CD14-positive monocyte (primary cell): ENCODE measurements at regions of chr12 and their contacts with region 1.

Region 1: DNA sequence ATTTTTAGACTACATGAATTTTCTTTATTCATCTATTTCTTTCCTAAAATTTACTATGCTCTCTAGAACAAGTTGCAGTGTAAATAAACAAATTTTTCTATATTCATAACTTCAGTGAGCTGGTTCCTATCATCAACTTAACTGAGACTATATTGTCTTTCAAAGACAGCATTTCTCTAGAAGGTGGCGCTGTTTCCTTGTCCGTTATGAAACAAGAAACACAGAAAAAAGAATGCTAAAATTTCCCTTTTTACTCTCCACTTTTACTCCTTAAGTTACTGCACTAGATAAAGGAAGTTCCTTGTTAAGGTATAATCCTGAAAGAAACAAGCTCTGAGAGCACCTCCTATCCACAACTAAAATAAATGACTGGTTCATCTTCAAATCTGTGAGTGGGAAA is 8.2 kb upstream of the CLEC2A start:
- DNase-seq: peak in 2 of 3 donors; percentile 50 to 59
- H3K4me3 ChIP-seq: no peak overlapping the region
- H3K4me3 Mint-ChIP-seq: peak overlapping the region in 1 of 2 donors; percentile 69
- H3K27ac ChIP-seq: peak overlapping the region in 1 of 2 donors; percentile 45
- H3K27ac Mint-ChIP-seq: peak overlapping the region in 4 of 7 donors; percentile 39 to 88 (median 82)
- H3K4me1 ChIP-seq: peaks cover 14 to 49% of the 10 kb centered on the region in 2 donors
- H3K4me1 Mint-ChIP-seq: peaks cover 56% of the 10 kb centered on the region
- H3K27me3 ChIP-seq: no peaks in the 10 kb centered on the region
- H3K27me3 Mint-ChIP-seq: peaks cover 0 to 3% (median under 1%) of the 10 kb centered on the region in 3 donors
- CTCF ChIP-seq: peak; percentile 77

Region 2: DNA sequence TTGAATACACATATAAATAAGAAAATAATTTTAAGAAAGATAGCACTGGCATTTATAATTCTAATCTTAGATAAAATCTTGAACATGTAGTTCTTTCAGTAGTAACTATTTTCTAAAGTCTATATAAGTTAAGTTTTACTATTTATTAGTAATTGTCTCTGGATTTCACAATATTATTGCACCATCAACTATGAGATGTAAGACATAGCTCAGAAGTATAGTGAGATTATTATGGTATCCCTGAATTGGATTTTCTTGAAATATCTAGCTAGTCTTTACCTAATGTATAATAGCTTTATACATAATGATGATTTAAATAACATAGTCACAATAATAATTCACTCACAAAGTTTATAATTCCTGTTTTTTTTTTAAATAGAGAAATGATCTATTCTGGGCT is 37.5 kb after region 1 on chr12:
- intact Hi-C with region 1: loop called in 1 of 2 experiments (anchors 5 kb)
- DNase-seq: peak; percentile 25 to 75 (median 58)
- H3K4me3 ChIP-seq: peak overlapping the region in 2 of 3 experiments; percentile 4 to 98
- H3K4me3 Mint-ChIP-seq: peak overlapping the region in 1 of 2 donors; percentile 36
- H3K27ac ChIP-seq: peak overlapping the region in 1 of 2 donors; percentile 34
- H3K27ac Mint-ChIP-seq: peak overlapping the region in 5 of 7 donors; percentile 53 to 77 (median 67)
- H3K4me1 ChIP-seq: peaks cover 58 to 79% of the 10 kb centered on the region in 2 donors
- H3K4me1 Mint-ChIP-seq: peaks cover 73% of the 10 kb centered on the region
- H3K27me3 ChIP-seq: no peaks in the 10 kb centered on the region
- H3K27me3 Mint-ChIP-seq: no peaks in the 10 kb centered on the region
- CTCF ChIP-seq: no peak

Region 3: DNA sequence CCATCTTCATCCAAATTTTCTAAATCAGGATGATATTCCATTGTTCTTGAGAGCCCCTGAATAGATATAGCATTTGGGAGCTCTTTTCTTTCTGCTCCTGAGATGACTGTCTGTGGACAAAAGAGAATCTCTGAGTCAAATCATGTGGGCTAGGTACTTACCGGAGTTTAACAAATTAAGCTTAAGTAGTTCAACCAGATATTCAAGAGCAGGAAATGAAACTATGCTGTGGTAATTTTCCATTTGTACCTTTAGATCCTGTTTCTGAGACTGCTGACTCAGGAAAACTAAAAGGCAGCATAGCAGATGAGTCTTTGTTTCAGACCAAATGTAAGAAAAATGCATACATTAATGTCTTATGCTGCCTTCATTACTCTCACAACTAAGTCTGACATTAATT is 189.7 kb after region 1 on chr12 and contains the start of gene CLEC7A:
- intact Hi-C with region 1: loop called (anchors 5 to 10 kb)
- DNase-seq: peak; percentile 83 to 96 (median 93)
- H3K4me3 ChIP-seq: peak within 1 kb of the TSS; percentile 85 to 100 (median 89)
- H3K4me3 Mint-ChIP-seq: peak within 1 kb of the TSS; percentile 94 to 95
- H3K27ac ChIP-seq: peak within 1 kb of the TSS; percentile 95 to 97
- H3K27ac Mint-ChIP-seq: peak within 1 kb of the TSS; percentile 97 to 99 (median 98)
- H3K4me1 ChIP-seq: peaks cover 51 to 64% of the 10 kb centered on the region in 2 donors
- H3K4me1 Mint-ChIP-seq: peaks cover 52% of the 10 kb centered on the region
- H3K27me3 ChIP-seq: no peaks in the 10 kb centered on the region
- H3K27me3 Mint-ChIP-seq: no peaks in the 10 kb centered on the region
- CTCF ChIP-seq: no peak
- polyA plus RNA-seq, gene CLEC7A: 235 to 809 (median 304) TPM

Region 4: GRCh38 chr12:10227648-10228047 is 287.3 kb after region 1 on chr12:
- intact Hi-C with region 1: no loop called
- DNase-seq: no peak
- H3K4me3 ChIP-seq: no peak overlapping the region
- H3K4me3 Mint-ChIP-seq: no peak overlapping the region
- H3K27ac ChIP-seq: no peak overlapping the region
- H3K27ac Mint-ChIP-seq: peak overlapping the region in 1 of 7 donors; percentile 50
- H3K4me1 ChIP-seq: no peaks in the 10 kb centered on the region
- H3K4me1 Mint-ChIP-seq: peaks cover 11% of the 10 kb centered on the region
- H3K27me3 ChIP-seq: no peaks in the 10 kb centered on the region
- H3K27me3 Mint-ChIP-seq: no peaks in the 10 kb centered on the region
- CTCF ChIP-seq: no peak